Esophagus squamous epithelium (tissue), 5 donors: ENCODE measurements at regions of chr3 and their contacts with region 1.

Region 1: DNA sequence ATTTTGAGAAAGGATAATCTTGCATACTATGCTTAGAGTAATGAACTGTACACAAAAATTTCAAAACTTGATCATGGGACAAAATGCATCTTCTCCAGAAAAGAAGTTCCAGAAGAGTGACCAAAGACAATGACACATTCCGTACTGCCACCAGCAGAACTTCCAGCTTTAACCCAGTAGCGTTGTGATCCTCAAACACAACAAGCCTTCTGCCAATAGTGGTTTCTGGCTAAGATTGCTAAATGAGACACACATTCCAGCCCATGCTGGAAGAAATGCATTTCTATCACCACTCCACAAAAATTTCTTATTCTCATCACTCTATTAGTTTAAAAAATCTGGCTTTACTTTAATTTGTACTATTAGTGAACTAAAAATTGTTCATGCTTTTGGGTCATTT is 334.9 kb downstream of the TBC1D5 start:
- DNase-seq: no peak
- H3K4me3 ChIP-seq: no peak overlapping the region
- H3K27ac ChIP-seq: no peak overlapping the region
- H3K4me1 ChIP-seq: no peaks in the 10 kb centered on the region
- H3K27me3 ChIP-seq: no peaks in the 10 kb centered on the region
- CTCF ChIP-seq: no peak
- POLR2A ChIP-seq: no peak

Region 2: GRCh38 chr3:17261633-17262369 is 145.8 kb before region 1 on chr3:
- intact Hi-C with region 1: loop called (anchors 5 kb)
- DNase-seq: no peak
- H3K4me3 ChIP-seq: no peak overlapping the region
- H3K27ac ChIP-seq: no peak overlapping the region
- H3K4me1 ChIP-seq: no peaks in the 10 kb centered on the region
- H3K27me3 ChIP-seq: no peaks in the 10 kb centered on the region
- CTCF ChIP-seq: no peak
- POLR2A ChIP-seq: no peak

Region 3: GRCh38 chr3:17278006-17278405 is 129.6 kb before region 1 on chr3:
- intact Hi-C with region 1: no loop called
- DNase-seq: no peak
- H3K4me3 ChIP-seq: no peak overlapping the region
- H3K27ac ChIP-seq: no peak overlapping the region
- H3K4me1 ChIP-seq: no peaks in the 10 kb centered on the region
- H3K27me3 ChIP-seq: no peaks in the 10 kb centered on the region
- CTCF ChIP-seq: no peak
- POLR2A ChIP-seq: no peak